Mammary epithelial cell (primary cell): ENCODE measurements at regions of chr10 and their contacts with region 1.

Region 1: DNA sequence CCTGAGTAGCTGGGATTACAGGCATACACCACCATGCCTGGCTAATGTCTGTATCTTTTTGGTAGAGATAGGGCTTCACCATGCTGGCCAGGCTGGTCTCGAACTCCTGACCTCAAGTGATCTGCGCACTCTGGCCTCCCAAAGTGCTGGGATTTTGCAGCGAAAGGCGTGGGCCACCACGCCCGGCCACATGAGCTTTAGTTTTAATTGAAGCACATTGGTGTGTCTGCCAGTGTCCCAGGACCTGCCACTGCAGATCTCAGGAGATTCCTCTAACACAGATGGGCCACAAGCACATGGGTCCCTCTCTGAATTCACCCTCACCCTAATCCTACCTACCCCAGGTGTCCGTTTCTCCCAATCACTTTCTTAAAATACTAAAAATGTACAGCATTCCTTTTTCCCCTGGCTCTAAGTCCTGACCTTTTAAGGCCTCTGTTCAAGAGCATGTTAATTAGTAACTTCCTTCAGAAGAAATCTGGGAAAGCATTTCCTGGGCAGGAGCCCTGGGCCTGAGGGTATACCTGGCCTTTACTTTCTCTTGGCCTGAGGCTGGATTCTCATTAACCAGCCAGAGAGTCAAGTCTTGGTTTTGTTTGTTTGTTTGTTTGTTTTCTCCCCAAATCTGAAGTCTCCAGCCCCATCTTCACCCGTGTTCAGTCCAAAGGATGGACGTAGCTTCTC is 82.6 kb downstream of the PRPF18 start:
- DNase-seq: no peak
- H3K4me3 ChIP-seq: no peak overlapping the region
- H3K27ac ChIP-seq: no peak overlapping the region
- H3K4me1 ChIP-seq: no peaks in the 10 kb centered on the region
- H3K27me3 ChIP-seq: no peaks in the 10 kb centered on the region
- CTCF ChIP-seq: no peak

Region 2: GRCh38 chr10:13206546-13207443 is 462.5 kb before region 1 on chr10:
- CTCF ChIA-PET with region 1: no interaction called
- dilution Hi-C with region 1: no loop called
- in situ Hi-C with region 1: no loop called
- intact Hi-C with region 1: no loop called
- DNase-seq: no peak
- H3K4me3 ChIP-seq: no peak overlapping the region
- H3K27ac ChIP-seq: no peak overlapping the region
- H3K4me1 ChIP-seq: no peaks in the 10 kb centered on the region
- H3K27me3 ChIP-seq: no peaks in the 10 kb centered on the region
- CTCF ChIP-seq: peak; percentile 49 to 50

Region 3: DNA sequence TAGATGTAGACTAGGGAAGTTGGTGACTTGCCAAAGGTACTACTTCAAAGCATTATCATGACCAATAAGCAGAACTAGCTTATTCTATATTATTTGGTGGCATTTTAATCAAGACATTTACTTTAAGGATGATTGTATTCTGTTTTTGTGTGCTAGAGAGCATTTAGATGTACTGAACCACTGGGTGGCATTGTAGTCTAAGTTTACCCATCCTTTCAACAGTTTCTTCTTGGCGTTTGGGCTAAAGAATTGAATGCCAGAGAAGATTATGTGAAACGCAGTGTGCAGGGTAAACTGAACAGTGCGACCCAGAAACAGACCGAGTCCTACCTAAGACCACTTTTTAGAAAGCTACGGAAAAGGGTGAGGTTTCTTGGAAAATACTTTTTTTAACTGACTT is 55.8 kb before region 1 on chr10:
- CTCF ChIA-PET with region 1: interaction called, 12 read pairs
- dilution Hi-C with region 1: no loop called
- in situ Hi-C with region 1: no loop called
- intact Hi-C with region 1: no loop called
- DNase-seq: no peak
- H3K4me3 ChIP-seq: no peak overlapping the region
- H3K27ac ChIP-seq: no peak overlapping the region
- H3K4me1 ChIP-seq: no peaks in the 10 kb centered on the region
- H3K27me3 ChIP-seq: no peaks in the 10 kb centered on the region
- CTCF ChIP-seq: peak; percentile 16 to 39

Region 4: DNA sequence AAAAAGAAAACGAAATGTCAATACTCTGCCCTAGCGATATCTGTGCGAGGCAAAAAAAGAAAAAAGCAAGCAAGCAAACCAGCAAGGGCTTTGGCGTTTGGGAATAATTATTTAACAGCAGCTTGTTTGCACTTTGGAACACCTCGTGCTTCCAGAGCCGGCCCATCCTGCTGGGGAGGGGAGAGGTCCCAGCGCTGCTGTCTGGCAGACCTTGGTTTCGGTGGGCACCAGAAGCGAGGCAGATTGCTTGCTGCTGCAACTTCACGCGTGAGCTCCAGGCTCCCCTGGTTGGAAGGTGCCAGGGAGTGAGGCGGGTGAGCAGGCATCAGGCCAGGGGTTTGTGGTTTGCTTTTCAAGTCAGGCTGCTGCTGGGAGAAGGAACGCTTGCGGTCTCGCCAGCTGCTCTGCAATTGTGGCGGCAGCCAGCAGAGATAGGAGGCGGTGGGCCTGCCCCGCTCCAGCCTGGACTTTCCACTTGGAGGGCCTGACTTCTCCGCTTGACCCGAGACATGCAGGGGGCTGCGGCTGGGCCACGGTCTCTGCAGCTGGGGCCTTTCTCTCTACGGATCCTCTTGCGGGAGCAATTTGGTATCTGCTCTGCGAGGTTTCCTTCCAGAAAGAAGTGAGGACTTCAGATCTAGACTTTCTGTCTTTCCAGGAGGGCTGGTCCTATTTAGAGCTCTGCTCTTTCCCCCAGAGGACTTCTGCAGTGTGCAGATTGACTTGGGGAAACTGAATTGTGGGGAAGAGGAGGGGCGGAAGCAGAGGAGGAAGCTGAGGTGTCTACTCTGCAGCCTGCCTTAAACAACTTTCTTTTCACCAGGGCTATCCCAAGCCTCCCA is 48.8 kb after region 1 on chr10:
- CTCF ChIA-PET with region 1: no interaction called
- dilution Hi-C with region 1: no loop called
- in situ Hi-C with region 1: no loop called
- intact Hi-C with region 1: no loop called
- DNase-seq: peak; percentile 82
- H3K4me3 ChIP-seq: peak overlapping the region; percentile 6 to 52 (median 39)
- H3K27ac ChIP-seq: no peak overlapping the region
- H3K4me1 ChIP-seq: peaks cover 19% of the 10 kb centered on the region
- H3K27me3 ChIP-seq: no peaks in the 10 kb centered on the region
- CTCF ChIP-seq: no peak